H1 (cell line): ENCODE measurements at regions of chr19 and their contacts with region 1.

Region 1: DNA sequence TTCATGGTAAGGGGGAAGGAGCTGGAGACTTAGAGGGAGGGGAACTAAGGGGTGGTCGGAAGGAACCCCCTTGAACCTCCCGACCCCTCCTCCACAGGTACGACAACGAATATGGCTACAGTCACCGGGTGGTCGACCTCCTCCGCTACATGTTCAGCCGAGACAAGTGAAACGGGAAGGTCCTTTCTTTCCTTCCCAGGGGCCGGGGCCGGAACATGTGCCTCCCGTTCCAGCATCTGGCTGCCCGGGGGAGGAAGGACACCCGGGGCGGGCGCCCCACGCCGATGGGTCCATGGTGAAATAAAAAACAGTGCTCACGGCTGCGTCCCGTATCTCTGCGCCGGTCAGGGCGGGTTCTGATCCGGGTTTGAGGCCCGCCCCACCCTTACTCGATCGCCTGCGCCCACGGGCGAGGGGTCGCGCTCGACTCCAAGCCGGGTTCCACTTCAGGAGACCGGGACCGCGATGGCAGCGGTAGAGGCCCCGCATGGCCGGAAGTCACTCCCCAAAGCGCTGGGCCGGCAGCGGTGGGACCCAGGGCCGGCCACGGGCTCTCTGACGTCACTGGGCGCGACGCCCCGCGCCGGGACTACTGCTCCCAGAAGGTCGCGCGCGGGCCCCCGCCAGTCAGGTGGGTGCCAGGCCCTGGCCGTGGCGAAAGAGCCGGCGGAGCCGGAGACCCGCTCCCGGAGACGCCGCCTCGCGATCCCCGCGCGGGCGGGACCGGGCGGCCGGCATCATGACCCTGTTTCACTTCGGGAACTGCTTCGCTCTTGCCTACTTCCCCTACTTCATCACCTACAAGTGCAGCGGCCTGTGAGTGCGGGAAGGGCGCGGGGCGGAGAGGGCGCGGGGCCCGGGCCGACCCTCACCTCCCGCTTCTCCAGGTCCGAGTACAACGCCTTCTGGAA is at the start of gene TMEM147:
- DNase-seq: peak; percentile 50 to 95
- H3K4me3 ChIP-seq: peak within 1 kb of the TSS; percentile 88 to 97 (median 94)
- H3K27ac ChIP-seq: peak within 1 kb of the TSS; percentile 78; the same call in 1 of the 2 replicates
- H3K4me1 ChIP-seq: peaks cover 0 to 13% (median 2%) of the 10 kb centered on the region in 4 experiments; a peak in 3 of 7 replicates
- H3K27me3 ChIP-seq: no peaks in the 10 kb centered on the region
- CTCF ChIP-seq: no peak
- EP300 ChIP-seq: no peak
- POLR2A ChIP-seq: peak in 1 of 2 experiments; percentile 88; a peak in 2 of 3 replicates
- RAD21 ChIP-seq: no peak
- total RNA-seq, gene TMEM147: 157 and 159 TPM in 2 replicates

Region 2: DNA sequence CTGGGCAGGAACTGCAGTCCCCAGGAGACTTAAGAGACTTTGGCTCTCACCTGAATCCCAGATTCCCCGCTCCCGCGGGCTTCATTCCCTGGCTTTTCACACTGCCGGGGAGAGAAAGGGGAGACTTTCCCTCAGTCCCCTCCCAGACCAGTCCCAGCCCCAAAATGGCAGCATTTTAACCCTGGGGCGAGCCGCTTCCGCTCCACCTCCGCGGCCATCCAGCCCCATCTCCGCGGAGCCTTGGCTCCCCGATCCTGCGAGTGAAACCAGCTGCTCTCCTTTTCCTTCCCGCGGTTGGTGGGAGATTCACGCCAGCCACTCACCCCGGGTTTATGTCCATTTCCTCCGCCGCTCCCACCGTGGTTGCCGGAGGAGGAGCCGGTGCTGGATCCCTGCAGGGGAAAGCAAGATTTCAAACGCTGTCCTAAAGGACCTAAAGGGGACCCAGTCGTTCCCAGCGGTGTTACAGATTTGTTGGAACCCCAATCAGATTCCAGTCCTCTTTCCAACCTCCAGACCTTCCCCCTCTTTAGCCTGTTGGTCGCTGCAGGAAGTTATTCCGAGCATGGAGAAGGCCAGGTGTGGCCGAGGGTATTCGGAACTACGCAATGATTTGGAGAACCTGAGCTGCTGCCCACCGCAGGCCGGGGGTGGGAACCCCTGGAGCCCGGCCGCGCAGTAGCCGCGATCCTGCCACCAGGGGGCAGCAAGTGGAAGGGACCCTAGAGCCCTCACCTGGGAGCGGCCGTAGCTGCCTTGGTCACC is 35.2 kb before region 1 on chr19:
- CTCF ChIA-PET with region 1: interaction called, 28 read pairs
- POLR2A ChIA-PET with region 1: interaction called, 23 read pairs
- DNase-seq: peak; percentile 78 to 98
- H3K4me3 ChIP-seq: peak overlapping the region; percentile 77 to 99 (median 93)
- H3K27ac ChIP-seq: peak overlapping the region; percentile 92
- H3K4me1 ChIP-seq: peaks cover 0 to 25% (median 21%) of the 10 kb centered on the region in 4 experiments; a peak in 6 of 7 replicates
- H3K27me3 ChIP-seq: peaks cover 0 to 11% (median 6%) of the 10 kb centered on the region in 4 experiments; a peak in 3 of 7 replicates
- CTCF ChIP-seq: peak; percentile 94 to 97 (median 96)
- EP300 ChIP-seq: peak in 1 of 2 experiments; percentile 56; a peak in 1 of 3 replicates
- POLR2A ChIP-seq: peak; percentile 94
- RAD21 ChIP-seq: peak; percentile 71 to 80

Region 3: DNA sequence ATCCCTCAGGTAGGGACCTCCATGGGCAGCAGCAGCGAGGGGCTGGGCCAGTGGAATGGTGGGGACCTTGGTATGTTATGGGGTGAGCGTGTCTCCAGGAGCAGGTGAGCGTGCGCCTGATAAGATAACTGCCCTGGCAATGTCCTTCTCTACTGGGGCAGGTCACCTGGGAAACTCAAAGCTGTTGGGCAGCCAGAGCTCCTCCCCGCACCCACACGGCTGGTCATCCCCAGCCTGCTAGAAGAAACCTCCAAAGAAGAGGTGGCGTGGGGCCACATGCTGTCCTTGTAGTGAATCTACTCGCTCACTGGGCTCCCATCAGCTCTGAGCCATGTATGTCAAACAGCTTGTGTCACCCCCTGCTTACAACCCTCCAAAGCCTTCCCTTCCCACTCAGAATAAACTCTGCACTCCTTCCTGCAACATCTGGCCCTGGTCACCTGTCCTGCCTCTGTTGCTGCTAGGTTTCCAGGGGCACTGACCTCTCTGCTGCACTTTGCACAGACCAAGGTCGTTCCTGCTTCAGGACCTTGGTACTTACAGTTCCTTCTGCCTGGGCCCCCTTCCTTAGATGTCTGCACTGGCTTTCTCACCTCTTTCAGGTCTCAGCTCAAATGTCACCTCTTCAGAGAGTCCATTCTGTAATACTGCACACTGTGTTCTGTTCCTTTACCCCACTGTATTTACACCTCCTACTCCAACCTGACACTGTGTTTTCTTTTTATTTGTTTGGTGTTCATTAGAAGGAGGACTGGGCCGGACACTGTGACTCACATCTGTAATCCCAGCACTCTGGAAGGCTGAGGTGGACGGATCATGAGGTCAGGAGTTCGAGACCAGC is 20.0 kb after region 1 on chr19:
- CTCF ChIA-PET with region 1: interaction called, 12 read pairs
- POLR2A ChIA-PET with region 1: no interaction called
- DNase-seq: no peak
- H3K4me3 ChIP-seq: no peak overlapping the region
- H3K27ac ChIP-seq: no peak overlapping the region
- H3K4me1 ChIP-seq: peaks cover 0 to 4% (median 0%) of the 10 kb centered on the region in 4 experiments; a peak in 1 of 7 replicates
- H3K27me3 ChIP-seq: peaks cover 0 to 4% (median 2%) of the 10 kb centered on the region in 4 experiments; a peak in 5 of 7 replicates
- CTCF ChIP-seq: no peak
- EP300 ChIP-seq: no peak
- POLR2A ChIP-seq: no peak
- RAD21 ChIP-seq: no peak

Region 4: GRCh38 chr19:35612559-35613321 is 67.5 kb after region 1 on chr19 and contains the start of gene HAUS5:
- CTCF ChIA-PET with region 1: interaction called, 10 read pairs
- POLR2A ChIA-PET with region 1: no interaction called
- DNase-seq: peak; percentile 81 to 99
- H3K4me3 ChIP-seq: peak within 1 kb of the TSS; percentile 84 to 90 (median 86)
- H3K27ac ChIP-seq: peak within 1 kb of the TSS; percentile 78
- H3K4me1 ChIP-seq: peaks cover 0 to 4% (median 2%) of the 10 kb centered on the region in 4 experiments; a peak in 4 of 7 replicates
- H3K27me3 ChIP-seq: peaks cover 0 to 3% (median 0%) of the 10 kb centered on the region in 4 experiments; a peak in 1 of 7 replicates
- CTCF ChIP-seq: no peak
- EP300 ChIP-seq: no peak
- POLR2A ChIP-seq: peak in 1 of 2 experiments; percentile 90; a peak in 2 of 3 replicates
- RAD21 ChIP-seq: peak in 1 of 2 experiments; percentile 12; a peak in 1 of 4 replicates
- total RNA-seq, gene HAUS5: 18.9 and 25.7 TPM in 2 replicates

Region 5: GRCh38 chr19:35648017-35648961 is 103.0 kb after region 1 on chr19 and contains the start of gene COX6B1:
- CTCF ChIA-PET with region 1: interaction called, 10 read pairs
- POLR2A ChIA-PET with region 1: interaction called, 4 read pairs
- DNase-seq: peak; percentile 84 to 88
- H3K4me3 ChIP-seq: peak within 1 kb of the TSS; percentile 62 to 98 (median 92)
- H3K27ac ChIP-seq: peak within 1 kb of the TSS; percentile 44; the same call in 1 of the 2 replicates
- H3K4me1 ChIP-seq: peaks cover 2 to 11% (median 4%) of the 10 kb centered on the region in 4 experiments; a peak in 5 of 7 replicates
- H3K27me3 ChIP-seq: no peaks in the 10 kb centered on the region; a peak in 3 of 7 replicates
- CTCF ChIP-seq: no peak
- EP300 ChIP-seq: no peak
- POLR2A ChIP-seq: peak; percentile 49 to 83
- RAD21 ChIP-seq: no peak
- total RNA-seq, gene COX6B1: 436 and 437 TPM in 2 replicates

Region 6: DNA sequence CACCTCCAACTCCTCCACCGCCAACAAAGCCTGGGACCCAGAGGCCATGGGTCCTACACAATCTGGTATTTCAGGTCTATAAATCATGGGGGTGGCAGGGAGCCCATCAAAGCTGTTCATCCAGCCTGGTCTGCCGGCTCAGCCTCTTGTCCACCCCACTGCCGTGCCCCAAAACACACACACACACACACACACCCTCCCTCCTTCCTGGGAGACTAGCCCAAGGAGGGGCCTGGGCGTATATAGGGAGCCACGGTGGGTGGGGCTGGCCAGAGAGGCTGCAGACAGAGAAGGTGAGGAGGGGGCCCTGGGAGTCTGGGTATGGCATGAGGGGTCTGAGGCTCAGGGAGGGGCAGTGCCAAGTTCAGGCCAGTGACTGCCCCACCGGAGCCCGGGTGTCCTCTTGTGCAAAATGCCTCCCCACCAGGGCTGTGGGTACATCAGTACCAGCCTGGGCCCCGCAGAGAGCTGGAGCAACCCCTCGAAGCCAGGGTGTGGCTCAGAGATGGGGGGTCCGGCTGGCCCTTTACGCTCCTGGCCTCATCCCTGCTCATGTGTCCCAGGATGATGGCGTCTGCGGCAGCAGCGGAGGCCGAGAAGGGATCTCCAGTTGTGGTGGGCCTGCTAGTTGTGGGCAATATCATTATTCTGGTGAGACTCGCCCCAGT is 121.1 kb after region 1 on chr19 and contains the start of gene UPK1A:
- CTCF ChIA-PET with region 1: no interaction called
- POLR2A ChIA-PET with region 1: no interaction called
- DNase-seq: no peak
- H3K4me3 ChIP-seq: no peak within 1 kb of the TSS
- H3K27ac ChIP-seq: no peak within 1 kb of the TSS
- H3K4me1 ChIP-seq: peaks cover 0 to 3% (median 0%) of the 10 kb centered on the region in 4 experiments; a peak in 2 of 7 replicates
- H3K27me3 ChIP-seq: no peaks in the 10 kb centered on the region; a peak in 1 of 7 replicates
- CTCF ChIP-seq: no peak
- EP300 ChIP-seq: no peak
- POLR2A ChIP-seq: no peak
- RAD21 ChIP-seq: no peak
- total RNA-seq, gene UPK1A: 0.56 and 0.61 TPM in 2 replicates

Region 7: DNA sequence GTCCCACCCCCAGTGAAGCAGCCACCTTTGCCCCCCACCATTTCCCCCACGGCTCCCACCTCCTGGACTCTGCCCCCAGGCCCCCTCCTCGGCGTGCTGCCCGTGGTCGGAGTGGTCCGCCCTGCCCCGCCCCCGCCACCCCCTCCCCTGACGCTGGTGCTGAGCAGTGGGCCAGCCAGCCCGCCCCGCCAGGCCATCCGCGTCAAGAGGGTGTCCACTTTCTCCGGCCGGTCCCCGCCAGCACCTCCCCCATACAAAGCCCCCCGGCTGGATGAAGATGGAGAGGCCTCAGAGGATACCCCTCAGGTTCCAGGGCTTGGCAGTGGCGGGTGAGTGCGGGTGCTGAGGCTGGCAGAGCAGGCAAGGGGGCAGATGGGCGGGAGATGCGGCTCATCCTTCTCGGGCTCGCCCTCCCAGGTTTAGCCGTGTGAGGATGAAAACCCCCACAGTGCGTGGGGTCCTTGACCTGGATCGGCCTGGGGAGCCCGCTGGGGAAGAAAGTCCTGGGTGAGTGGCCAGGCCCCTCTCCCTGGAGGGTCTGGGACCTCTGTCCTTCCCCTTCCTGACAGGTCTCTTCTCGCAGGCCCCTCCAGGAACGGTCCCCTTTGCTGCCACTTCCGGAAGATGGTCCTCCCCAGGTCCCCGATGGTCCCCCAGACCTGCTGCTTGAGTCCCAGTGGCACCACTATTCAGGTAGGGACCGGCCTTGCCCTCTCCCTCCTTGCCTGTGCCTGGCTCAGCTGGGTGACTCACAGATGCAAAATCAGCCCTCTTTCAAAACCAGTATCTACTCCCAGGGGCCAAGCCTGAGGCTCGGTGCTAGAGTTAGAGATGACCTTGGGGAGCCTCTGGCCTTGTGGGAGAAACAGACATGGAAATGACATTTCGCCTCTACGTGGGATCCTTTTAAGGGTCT is 188.2 kb after region 1 on chr19:
- CTCF ChIA-PET with region 1: no interaction called
- POLR2A ChIA-PET with region 1: no interaction called
- DNase-seq: no peak
- H3K4me3 ChIP-seq: no peak overlapping the region
- H3K27ac ChIP-seq: no peak overlapping the region
- H3K4me1 ChIP-seq: no peaks in the 10 kb centered on the region
- H3K27me3 ChIP-seq: no peaks in the 10 kb centered on the region
- CTCF ChIP-seq: no peak
- EP300 ChIP-seq: no peak
- POLR2A ChIP-seq: no peak
- RAD21 ChIP-seq: no peak